Transverse colon (tissue), 4 donors: ENCODE measurements at regions of chr12 and their contacts with region 1.

Region 1: DNA sequence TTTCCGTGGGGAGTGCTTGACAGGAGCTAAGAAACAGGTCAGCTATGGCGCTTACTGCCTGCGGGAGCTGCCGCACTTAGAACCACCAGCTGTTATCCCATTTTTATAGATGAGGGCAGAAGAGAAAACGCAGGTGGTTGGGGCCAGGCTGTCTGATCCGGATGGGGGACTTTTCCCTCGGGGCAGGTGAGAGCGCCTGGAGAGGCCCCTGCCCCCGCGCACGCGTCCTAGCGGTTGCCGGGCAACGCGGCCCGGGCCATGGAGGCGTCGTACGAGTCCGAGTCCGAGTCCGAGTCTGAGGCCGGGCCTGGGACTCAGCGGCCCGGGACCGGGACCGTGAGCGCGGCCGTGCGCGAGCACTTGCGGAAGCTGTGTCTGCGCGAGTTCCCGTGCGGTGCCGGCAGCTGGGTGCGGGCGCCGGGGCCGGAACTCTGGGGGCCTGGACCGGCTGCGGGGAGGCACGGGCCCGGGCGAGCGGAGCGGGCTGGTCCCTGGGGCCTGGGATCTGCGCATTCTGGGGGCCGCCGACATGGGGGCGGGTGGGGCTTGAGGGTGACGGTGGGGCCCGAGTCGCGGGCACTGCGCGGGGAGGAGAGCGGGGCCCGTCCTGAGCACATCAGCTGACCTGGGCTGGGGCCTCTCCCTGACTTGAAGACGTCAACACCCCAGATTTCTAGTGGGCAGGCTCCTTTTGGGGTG is at the start of gene LRRC43:
- DNase-seq: peak; percentile 41
- H3K4me3 ChIP-seq: peak within 1 kb of the TSS; percentile 21 to 51 (median 46)
- H3K27ac ChIP-seq: no peak within 1 kb of the TSS
- H3K4me1 ChIP-seq: peaks cover 5 to 9% (median 7%) of the 10 kb centered on the region in 4 donors
- H3K27me3 ChIP-seq: peaks cover 6% of the 10 kb centered on the region
- CTCF ChIP-seq: no peak
- EP300 ChIP-seq: no peak
- POLR2A ChIP-seq: no peak
- total RNA-seq, gene LRRC43: 0.64 TPM in 1 of 4 donors, not detected in the others

Region 2: GRCh38 chr12:122137681-122138080 is 45.4 kb before region 1 on chr12:
- in situ Hi-C with region 1: loop called in 1 of 4 experiments (anchors 10 kb)
- intact Hi-C with region 1: no loop called
- DNase-seq: no peak
- H3K4me3 ChIP-seq: no peak overlapping the region
- H3K27ac ChIP-seq: no peak overlapping the region
- H3K4me1 ChIP-seq: no peaks in the 10 kb centered on the region
- H3K27me3 ChIP-seq: no peaks in the 10 kb centered on the region
- CTCF ChIP-seq: no peak
- EP300 ChIP-seq: no peak
- POLR2A ChIP-seq: no peak

Region 3: GRCh38 chr12:122215771-122216170 is 32.7 kb after region 1 on chr12:
- in situ Hi-C with region 1: no loop called
- intact Hi-C with region 1: no loop called
- DNase-seq: no peak
- H3K4me3 ChIP-seq: no peak overlapping the region
- H3K27ac ChIP-seq: no peak overlapping the region
- H3K4me1 ChIP-seq: no peaks in the 10 kb centered on the region
- H3K27me3 ChIP-seq: no peaks in the 10 kb centered on the region
- CTCF ChIP-seq: no peak
- EP300 ChIP-seq: no peak
- POLR2A ChIP-seq: no peak

Region 4: GRCh38 chr12:122672515-122672914 is 489.5 kb after region 1 on chr12:
- in situ Hi-C with region 1: no loop called
- intact Hi-C with region 1: no loop called
- DNase-seq: no peak
- H3K4me3 ChIP-seq: no peak overlapping the region
- H3K27ac ChIP-seq: no peak overlapping the region
- H3K4me1 ChIP-seq: no peaks in the 10 kb centered on the region
- H3K27me3 ChIP-seq: no peaks in the 10 kb centered on the region
- CTCF ChIP-seq: no peak
- EP300 ChIP-seq: no peak
- POLR2A ChIP-seq: no peak